Gastrocnemius medialis (tissue), 4 donors: ENCODE measurements at regions of chr9 and their contacts with region 1.

Region 1: GRCh38 chr9:121770415-121771273 is 119.2 kb downstream of the DAB2IP start:
- DNase-seq: no peak
- ATAC-seq: no peak
- H3K4me3 ChIP-seq: no peak overlapping the region
- H3K27ac ChIP-seq: peak overlapping the region; percentile 80 to 88 (median 85)
- H3K4me1 ChIP-seq: peaks cover 31 to 34% of the 10 kb centered on the region in 2 donors
- H3K27me3 ChIP-seq: no peaks in the 10 kb centered on the region
- CTCF ChIP-seq: no peak
- POLR2A ChIP-seq: no peak

Region 2: DNA sequence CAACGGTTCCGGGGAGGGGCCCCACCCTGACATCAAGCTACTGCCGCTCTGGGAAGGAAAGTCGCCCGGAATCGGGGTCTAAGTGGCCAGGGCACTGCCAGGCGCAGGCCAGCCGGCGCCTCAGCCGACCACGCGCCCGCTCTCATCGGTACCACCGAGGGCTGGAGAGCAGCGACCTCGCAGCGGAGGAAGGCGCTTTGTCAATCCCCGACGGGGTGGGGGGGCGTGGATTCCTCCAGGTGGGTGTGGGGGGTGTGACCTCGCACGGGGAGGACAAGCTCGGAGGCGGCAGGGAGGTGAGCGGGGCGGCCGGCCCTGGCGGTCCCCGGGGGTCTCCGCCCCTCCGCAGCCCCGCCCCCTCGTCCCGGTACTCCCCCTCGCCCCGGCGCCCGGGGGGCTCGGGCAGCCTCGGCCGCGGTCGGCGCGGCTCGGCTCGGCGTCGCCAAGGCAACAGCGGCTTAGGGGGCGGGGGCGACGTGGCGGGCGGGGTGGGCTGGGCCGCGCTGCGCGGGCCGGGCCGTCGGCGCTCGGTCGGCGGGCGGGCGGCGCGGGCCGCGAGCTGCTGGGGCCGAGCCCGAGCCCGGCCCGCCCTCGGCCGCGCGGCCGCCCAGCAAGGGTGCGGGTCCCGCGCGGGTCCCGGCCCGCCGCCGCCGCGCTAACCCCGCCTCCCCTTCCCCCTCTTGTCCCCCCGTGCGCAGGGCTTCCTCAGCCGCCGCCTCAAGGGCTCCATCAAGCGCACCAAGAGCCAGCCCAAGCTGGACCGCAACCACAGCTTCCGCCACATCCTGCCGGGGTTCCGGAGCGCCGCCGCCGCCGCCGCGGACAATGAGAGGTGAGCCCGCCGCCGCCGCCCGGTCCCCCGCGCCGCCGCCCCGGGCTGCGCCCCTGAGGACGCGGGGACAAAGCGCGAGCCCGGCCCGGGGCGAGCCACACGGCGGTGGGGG is 71.7 kb before region 1 on chr9:
- in situ Hi-C with region 1: no loop called
- intact Hi-C with region 1: loop called (anchors 2 kb)
- DNase-seq: no peak
- ATAC-seq: peak in 1 of 2 donors; percentile 21
- H3K4me3 ChIP-seq: peak overlapping the region; percentile 39 to 48 (median 46)
- H3K27ac ChIP-seq: peak overlapping the region; percentile 77 to 88 (median 78)
- H3K4me1 ChIP-seq: peaks cover 26 to 42% of the 10 kb centered on the region in 2 donors
- H3K27me3 ChIP-seq: no peaks in the 10 kb centered on the region
- CTCF ChIP-seq: no peak
- POLR2A ChIP-seq: no peak

Region 3: DNA sequence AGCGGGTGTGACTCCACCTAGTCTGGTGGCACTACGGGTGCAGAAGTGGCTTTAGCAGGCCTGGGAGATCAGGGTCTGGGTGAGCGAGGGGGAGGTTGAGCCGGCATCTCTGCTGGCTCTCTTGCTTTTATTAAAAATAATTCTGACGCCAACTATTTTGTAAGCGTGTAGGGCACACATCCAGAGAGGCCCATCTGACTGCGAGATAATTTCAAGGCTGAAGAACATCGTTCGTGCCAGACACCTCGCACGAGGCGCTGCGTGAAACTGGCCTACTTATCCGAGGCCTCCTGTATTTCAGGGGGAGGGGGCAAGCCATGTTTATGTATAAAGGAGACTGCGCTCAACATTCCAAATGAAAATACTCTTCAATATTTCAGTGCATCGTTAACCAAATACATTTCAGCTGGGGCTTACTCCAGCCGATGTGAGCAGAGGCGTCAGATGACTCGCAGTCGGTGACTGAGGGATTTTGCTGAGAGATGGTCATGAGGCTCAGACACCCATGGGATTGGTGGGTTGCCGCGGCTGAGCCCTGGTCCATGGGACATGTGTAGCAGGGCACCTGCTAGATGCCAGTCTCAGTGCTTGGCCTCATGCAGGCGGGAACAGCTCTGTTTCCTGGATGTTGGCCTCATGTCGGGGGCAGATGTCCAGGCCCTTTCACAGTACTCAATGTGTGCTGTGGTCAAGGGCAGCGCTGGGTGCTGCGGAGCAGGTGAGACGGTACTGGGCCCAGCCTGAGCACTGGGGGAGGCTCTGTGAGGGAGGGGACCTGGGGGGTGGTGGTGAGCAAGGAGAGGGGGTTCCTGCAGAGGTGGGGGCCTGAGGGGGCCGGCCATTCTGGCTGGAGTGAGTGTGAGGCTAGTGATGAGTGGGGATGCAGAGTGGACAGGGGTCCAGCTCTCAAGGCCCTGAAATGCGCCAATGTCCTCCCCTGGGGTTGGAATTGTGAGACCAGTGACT is 82.3 kb after region 1 on chr9:
- in situ Hi-C with region 1: no loop called
- intact Hi-C with region 1: loop called (anchors 1 kb)
- DNase-seq: peak; percentile 52 to 73
- ATAC-seq: peak; percentile 77 to 87
- H3K4me3 ChIP-seq: no peak overlapping the region
- H3K27ac ChIP-seq: peak overlapping the region; percentile 23 to 71 (median 62)
- H3K4me1 ChIP-seq: peaks cover 11 to 14% of the 10 kb centered on the region in 2 donors
- H3K27me3 ChIP-seq: no peaks in the 10 kb centered on the region
- CTCF ChIP-seq: no peak
- POLR2A ChIP-seq: peak in 1 of 2 donors; percentile 20